ENCODE measurements at regions of chr12 and their contacts with region 1.

Region 1: DNA sequence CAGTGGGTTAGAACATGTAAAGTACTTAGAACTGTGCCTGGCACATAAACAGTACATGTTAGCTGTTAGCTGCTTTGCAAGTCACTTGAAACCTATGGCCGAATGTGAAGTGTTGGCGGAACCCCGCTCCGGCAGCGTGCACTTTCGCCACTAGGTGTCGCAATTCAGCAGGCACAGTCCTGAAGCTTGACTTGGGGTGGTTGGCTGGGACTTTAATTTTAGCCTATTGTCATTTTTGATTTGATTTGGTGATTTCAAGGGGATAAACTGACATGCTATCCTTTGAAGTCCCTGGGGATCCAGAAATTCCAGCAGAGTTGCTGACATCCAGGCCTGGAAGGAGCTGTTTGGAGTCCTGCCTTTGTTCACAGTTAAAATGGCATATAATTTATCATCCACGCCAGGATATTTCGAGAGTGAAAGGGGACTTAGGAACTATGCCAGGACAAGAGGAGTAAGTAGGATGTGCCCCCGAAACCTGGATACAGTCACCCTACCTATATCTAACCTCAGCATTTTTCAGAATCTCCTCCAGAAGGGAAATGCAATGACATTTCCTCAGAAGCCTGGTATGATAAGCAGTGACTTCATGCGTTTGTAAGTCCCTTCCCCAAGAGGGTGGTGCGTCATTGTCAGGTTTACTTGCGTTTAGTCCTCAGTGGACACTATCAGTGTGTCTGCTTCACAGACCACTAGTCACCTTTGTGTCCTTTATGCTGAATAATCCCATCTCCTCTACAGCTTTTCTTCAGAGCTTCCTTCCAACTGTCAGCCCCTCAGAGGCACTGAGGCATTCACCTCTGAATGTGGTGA is 3.5 kb upstream of the TSPAN9 start:
- DNase-seq: peak; percentile 87 to 93
- H3K4me3 ChIP-seq: no peak overlapping the region
- H3K4me3 Mint-ChIP-seq: no peak overlapping the region
- H3K27ac Mint-ChIP-seq: no peak overlapping the region
- H3K4me1 ChIP-seq: peaks cover 5% of the 10 kb centered on the region
- H3K4me1 Mint-ChIP-seq: peaks cover 14% of the 10 kb centered on the region
- H3K27me3 ChIP-seq: no peaks in the 10 kb centered on the region
- H3K27me3 Mint-ChIP-seq: no peaks in the 10 kb centered on the region
- CTCF ChIP-seq: peak; percentile 98 to 99

Region 2: DNA sequence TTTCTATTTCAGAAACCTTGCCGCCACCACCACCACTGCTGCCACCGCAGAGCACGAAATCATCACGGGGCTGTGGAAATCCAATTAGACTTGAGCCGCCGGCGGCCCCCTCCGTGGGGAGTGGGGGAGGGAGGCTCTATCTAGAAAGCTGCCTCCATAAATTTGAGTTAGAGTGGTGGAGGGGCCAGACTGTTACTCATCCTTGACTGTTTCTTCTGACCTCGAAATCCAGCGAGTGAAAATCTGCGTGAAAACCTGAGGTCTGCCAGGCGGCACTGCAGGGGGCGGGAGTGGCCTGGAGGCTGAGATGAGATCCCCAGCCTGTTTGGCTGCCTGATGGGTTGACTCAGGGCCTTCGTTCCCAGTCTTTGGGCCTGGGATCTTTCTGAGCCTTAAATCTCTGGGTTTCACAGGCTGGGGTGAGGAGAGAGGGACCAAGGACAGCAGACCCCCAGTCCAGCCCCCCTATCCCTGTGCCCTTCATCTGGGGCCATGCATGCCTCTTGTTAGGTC is 33.5 kb after region 1 on chr12:
- CTCF ChIA-PET with region 1: interaction called, 6 read pairs
- POLR2A ChIA-PET with region 1: interaction called, 3 read pairs
- intact Hi-C with region 1: loop called (anchors 1 kb)
- DNase-seq: no peak
- H3K4me3 ChIP-seq: no peak overlapping the region
- H3K4me3 Mint-ChIP-seq: no peak overlapping the region
- H3K27ac Mint-ChIP-seq: no peak overlapping the region
- H3K4me1 ChIP-seq: peaks cover 25% of the 10 kb centered on the region
- H3K4me1 Mint-ChIP-seq: peaks cover 31% of the 10 kb centered on the region
- H3K27me3 ChIP-seq: no peaks in the 10 kb centered on the region
- H3K27me3 Mint-ChIP-seq: no peaks in the 10 kb centered on the region
- CTCF ChIP-seq: no peak

Region 3: GRCh38 chr12:3119748-3120601 is 46.3 kb after region 1 on chr12:
- CTCF ChIA-PET with region 1: interaction called, 6 read pairs
- POLR2A ChIA-PET with region 1: no interaction called
- intact Hi-C with region 1: loop called (anchors 5 kb)
- DNase-seq: no peak
- H3K4me3 ChIP-seq: no peak overlapping the region
- H3K4me3 Mint-ChIP-seq: no peak overlapping the region
- H3K27ac Mint-ChIP-seq: peak overlapping the region; percentile 14
- H3K4me1 ChIP-seq: no peaks in the 10 kb centered on the region
- H3K4me1 Mint-ChIP-seq: no peaks in the 10 kb centered on the region
- H3K27me3 ChIP-seq: no peaks in the 10 kb centered on the region
- H3K27me3 Mint-ChIP-seq: no peaks in the 10 kb centered on the region
- CTCF ChIP-seq: no peak

Region 4: GRCh38 chr12:3135522-3136461 is 62.1 kb after region 1 on chr12:
- CTCF ChIA-PET with region 1: interaction called, 14 read pairs
- POLR2A ChIA-PET with region 1: no interaction called
- intact Hi-C with region 1: loop called (anchors 1 kb)
- DNase-seq: peak; percentile 76 to 77
- H3K4me3 ChIP-seq: no peak overlapping the region
- H3K4me3 Mint-ChIP-seq: no peak overlapping the region
- H3K27ac Mint-ChIP-seq: no peak overlapping the region
- H3K4me1 ChIP-seq: no peaks in the 10 kb centered on the region
- H3K4me1 Mint-ChIP-seq: no peaks in the 10 kb centered on the region
- H3K27me3 ChIP-seq: no peaks in the 10 kb centered on the region
- H3K27me3 Mint-ChIP-seq: no peaks in the 10 kb centered on the region
- CTCF ChIP-seq: peak; percentile 85 to 94

Region 5: GRCh38 chr12:3150931-3151835 is 77.5 kb after region 1 on chr12:
- CTCF ChIA-PET with region 1: no interaction called
- POLR2A ChIA-PET with region 1: no interaction called
- intact Hi-C with region 1: no loop called
- DNase-seq: no peak
- H3K4me3 ChIP-seq: no peak overlapping the region
- H3K4me3 Mint-ChIP-seq: no peak overlapping the region
- H3K27ac Mint-ChIP-seq: peak overlapping the region; percentile 13
- H3K4me1 ChIP-seq: no peaks in the 10 kb centered on the region
- H3K4me1 Mint-ChIP-seq: peaks cover 7% of the 10 kb centered on the region
- H3K27me3 ChIP-seq: no peaks in the 10 kb centered on the region
- H3K27me3 Mint-ChIP-seq: no peaks in the 10 kb centered on the region
- CTCF ChIP-seq: no peak

Region 6: DNA sequence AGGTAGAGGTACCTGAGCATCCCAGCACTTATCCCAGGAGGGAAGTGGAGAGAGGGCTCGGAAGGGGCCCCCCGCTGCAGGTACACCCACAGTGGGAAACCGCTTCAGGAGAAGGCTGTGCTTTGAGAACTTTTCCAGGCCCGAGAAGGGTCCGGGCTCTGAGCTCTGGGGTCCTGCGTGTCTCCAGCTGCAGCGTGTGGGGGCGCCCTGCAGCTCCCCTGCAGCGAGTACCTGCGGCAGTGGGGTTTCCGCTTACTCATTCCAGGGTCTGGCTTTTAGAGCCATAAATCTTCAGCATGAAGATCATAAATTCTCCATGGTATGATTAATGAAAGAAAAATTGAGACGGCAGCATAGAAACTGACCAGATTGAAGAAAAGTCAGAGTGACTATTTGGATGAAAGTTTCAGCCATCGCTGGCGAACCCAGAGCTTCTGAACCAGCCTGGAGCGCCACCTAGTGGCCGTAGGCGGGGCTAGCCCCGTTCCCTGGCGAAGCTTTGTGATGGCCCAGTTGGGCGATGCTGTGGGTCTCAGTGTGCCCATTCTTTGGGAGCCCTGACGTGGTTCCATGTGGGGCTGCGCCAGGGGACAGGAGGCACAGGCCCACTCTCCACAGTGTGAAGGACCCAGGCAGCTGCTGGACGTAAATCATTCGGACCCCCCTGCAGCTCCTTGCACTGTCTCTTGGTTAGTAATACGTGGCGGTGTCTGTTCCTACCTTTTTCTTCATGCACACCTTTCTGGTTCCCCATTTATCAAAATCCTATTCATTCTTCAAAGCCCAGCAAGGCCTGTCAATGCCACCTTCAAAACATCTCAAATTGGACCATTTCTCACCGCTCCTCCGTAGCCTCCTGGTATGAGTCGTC is 201.8 kb after region 1 on chr12:
- CTCF ChIA-PET with region 1: interaction called, 15 read pairs
- POLR2A ChIA-PET with region 1: no interaction called
- intact Hi-C with region 1: loop called (anchors 1 kb)
- DNase-seq: peak; percentile 68 to 86
- H3K4me3 ChIP-seq: no peak overlapping the region
- H3K4me3 Mint-ChIP-seq: no peak overlapping the region
- H3K27ac Mint-ChIP-seq: no peak overlapping the region
- H3K4me1 ChIP-seq: no peaks in the 10 kb centered on the region
- H3K4me1 Mint-ChIP-seq: no peaks in the 10 kb centered on the region
- H3K27me3 ChIP-seq: no peaks in the 10 kb centered on the region
- H3K27me3 Mint-ChIP-seq: no peaks in the 10 kb centered on the region
- CTCF ChIP-seq: peak; percentile 99

Measured in Caco-2 (cell line).